BJ (cell line): ENCODE measurements at regions of chr14 and their contacts with region 1.

Region 1: DNA sequence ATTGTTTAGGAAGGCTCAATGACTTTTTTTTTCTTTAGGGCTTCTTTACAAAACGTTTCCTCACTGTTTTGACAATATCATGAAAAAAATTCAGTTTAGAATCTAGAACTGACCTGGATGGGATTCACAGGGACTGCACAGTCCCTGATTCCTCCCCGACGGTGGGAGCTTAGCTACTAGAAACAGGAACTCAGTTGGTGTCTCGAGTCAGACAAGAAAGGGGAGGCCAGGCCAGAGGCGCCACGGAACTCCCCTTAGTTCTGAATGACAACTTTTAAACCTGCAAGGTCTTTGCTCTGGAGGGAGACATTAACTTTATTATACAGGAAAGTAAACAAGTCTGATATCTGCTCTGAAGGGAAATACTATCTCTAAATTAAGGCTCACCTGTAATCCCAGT is 45.4 kb upstream of the SRP54 start:
- DNase-seq: no peak
- H3K4me3 ChIP-seq: no peak overlapping the region
- H3K27me3 ChIP-seq: no peaks in the 10 kb centered on the region
- CTCF ChIP-seq: no peak

Region 2: GRCh38 chr14:34920339-34920738 is 17.1 kb before region 1 on chr14:
- CTCF ChIA-PET with region 1: no interaction called
- POLR2A ChIA-PET with region 1: interaction called, 15 read pairs
- DNase-seq: no peak
- H3K4me3 ChIP-seq: no peak overlapping the region
- H3K27me3 ChIP-seq: no peaks in the 10 kb centered on the region
- CTCF ChIP-seq: no peak